Astrocyte of the cerebellum (primary cell): ENCODE measurements at regions of chr1 and their contacts with region 1.

Region 1: GRCh38 chr1:117398957-117399356 is 31.7 kb downstream of the MAN1A2 start:
- DNase-seq: no peak
- H3K4me3 ChIP-seq: no peak overlapping the region
- CTCF ChIP-seq: no peak

Region 2: DNA sequence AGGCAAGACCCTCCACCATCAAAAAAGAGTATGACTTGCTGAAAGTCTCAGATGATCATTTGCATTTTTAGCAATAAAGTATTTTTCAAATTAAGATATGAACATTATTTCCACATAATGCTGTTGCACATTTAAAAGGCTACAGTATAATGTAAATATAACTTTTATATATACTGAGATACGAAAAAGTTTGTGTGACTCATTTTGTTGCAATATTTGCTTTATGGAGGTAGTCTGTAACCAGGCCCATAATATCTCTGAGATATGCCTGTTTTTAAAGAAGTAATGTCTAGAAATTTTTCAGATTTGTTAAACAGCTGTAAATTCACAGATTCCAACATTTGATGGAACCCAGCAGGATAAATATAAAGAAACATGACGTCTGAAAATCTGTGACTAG is 55.0 kb after region 1 on chr1:
- in situ Hi-C with region 1: loop called (anchors 5 kb)
- DNase-seq: no peak
- H3K4me3 ChIP-seq: no peak overlapping the region
- CTCF ChIP-seq: no peak

Region 3: GRCh38 chr1:117481410-117481809 is 82.5 kb after region 1 on chr1:
- in situ Hi-C with region 1: no loop called
- DNase-seq: no peak
- H3K4me3 ChIP-seq: no peak overlapping the region
- CTCF ChIP-seq: no peak